Breast epithelium (tissue), 4 donors: ENCODE measurements at regions of chr7 and their contacts with region 1.

Region 1: DNA sequence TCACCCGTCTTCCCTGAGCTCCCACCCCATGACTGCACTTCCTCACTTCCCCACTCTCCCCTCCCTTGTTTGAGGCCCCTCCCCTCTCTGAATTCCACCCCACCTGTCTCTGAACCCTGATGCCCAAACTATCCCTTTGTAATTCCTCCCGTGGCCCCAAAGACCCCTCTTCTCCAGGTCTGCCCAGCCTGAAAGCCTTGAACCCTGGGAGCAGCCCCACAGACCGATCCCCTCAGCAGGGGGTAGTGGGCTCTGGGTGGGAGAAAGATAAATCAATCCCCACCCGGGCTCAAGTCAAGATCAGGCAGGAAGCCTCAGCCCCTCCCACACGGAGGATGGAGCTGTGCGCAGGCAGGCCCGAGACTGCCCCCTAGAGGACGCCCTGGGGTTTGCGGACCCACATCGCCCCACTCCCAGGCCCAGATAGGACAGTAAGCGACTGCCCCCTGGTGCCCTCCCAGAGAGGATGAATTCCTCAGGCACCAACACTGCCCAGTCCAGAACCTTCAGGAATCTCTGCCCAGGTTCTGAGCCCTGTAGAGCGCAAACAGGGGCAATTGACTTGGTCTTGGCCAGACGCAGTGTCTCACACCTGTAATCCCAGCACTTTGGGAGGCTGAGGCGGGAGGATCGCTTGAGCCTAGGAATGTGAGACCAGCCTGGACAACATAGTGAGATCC is 11.7 kb downstream of the HSPB1 start:
- DNase-seq: peak; percentile 94 to 98
- H3K4me3 ChIP-seq: no peak overlapping the region
- H3K27ac ChIP-seq: peak overlapping the region; percentile 19 to 25
- H3K4me1 ChIP-seq: peaks cover 0 to 5% of the 10 kb centered on the region in 2 donors
- H3K27me3 ChIP-seq: no peaks in the 10 kb centered on the region
- CTCF ChIP-seq: peak; percentile 97 to 100 (median 100)
- POLR2A ChIP-seq: no peak

Region 2: GRCh38 chr7:76179686-76180085 is 134.5 kb before region 1 on chr7:
- intact Hi-C with region 1: loop called (anchors 10 kb)
- DNase-seq: no peak
- H3K4me3 ChIP-seq: no peak overlapping the region
- H3K27ac ChIP-seq: no peak overlapping the region
- H3K4me1 ChIP-seq: no peaks in the 10 kb centered on the region
- H3K27me3 ChIP-seq: no peaks in the 10 kb centered on the region
- CTCF ChIP-seq: no peak
- POLR2A ChIP-seq: no peak